Mucosa of descending colon (tissue), 3 donors: ENCODE measurements at regions of chr6 and their contacts with region 1.

Region 1: GRCh38 chr6:144104898-144105487 is 9.6 kb upstream of the SF3B5 start:
- DNase-seq: peak in 1 of 3 donors; percentile 83
- ATAC-seq: peak; percentile 63
- H3K4me3 ChIP-seq: no peak overlapping the region
- H3K4me1 ChIP-seq: no peaks in the 10 kb centered on the region
- CTCF ChIP-seq: peak; percentile 17

Region 2: GRCh38 chr6:143958839-143959399 is 146.1 kb before region 1 on chr6:
- intact Hi-C with region 1: no loop called
- DNase-seq: no peak
- ATAC-seq: no peak
- H3K4me3 ChIP-seq: no peak overlapping the region
- H3K4me1 ChIP-seq: no peaks in the 10 kb centered on the region
- CTCF ChIP-seq: no peak

Region 3: DNA sequence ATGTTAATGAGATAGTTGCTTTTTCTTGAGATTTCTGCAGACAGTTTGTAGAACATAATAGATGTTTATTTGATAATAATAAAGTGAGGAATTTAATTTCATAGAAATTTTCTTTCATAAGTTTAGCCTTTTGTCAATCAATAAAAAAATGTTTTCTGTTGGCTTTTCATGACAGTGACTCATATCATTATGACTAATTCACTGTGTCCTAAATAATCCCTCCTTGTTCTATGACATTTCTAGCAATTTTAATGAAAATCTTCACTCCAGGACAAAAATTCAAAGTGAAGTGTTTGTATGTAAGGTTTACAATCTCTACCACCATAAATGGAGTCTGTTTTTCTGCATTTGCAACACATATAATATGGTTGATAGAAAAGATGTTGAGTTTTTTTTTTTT is 290.0 kb after region 1 on chr6:
- intact Hi-C with region 1: no loop called
- DNase-seq: no peak
- ATAC-seq: no peak
- H3K4me3 ChIP-seq: no peak overlapping the region
- H3K4me1 ChIP-seq: no peaks in the 10 kb centered on the region
- CTCF ChIP-seq: no peak

Region 4: GRCh38 chr6:144482142-144482541 is 377.1 kb after region 1 on chr6:
- intact Hi-C with region 1: loop called in 1 of 2 experiments (anchors 2 kb)
- DNase-seq: peak in 2 of 3 donors; percentile 82 to 94
- ATAC-seq: peak; percentile 82
- H3K4me3 ChIP-seq: no peak overlapping the region
- H3K4me1 ChIP-seq: no peaks in the 10 kb centered on the region
- CTCF ChIP-seq: peak; percentile 39